Astrocyte of the cerebellum (primary cell): ENCODE measurements at regions of chr12 and their contacts with region 1.

Region 1: GRCh38 chr12:25332143-25332542 is 81.4 kb upstream of the KRAS start:
- DNase-seq: no peak
- H3K4me3 ChIP-seq: no peak overlapping the region
- CTCF ChIP-seq: no peak

Region 2: GRCh38 chr12:25295361-25295760 is 36.8 kb before region 1 on chr12:
- in situ Hi-C with region 1: no loop called
- DNase-seq: no peak
- H3K4me3 ChIP-seq: no peak overlapping the region
- CTCF ChIP-seq: no peak

Region 3: DNA sequence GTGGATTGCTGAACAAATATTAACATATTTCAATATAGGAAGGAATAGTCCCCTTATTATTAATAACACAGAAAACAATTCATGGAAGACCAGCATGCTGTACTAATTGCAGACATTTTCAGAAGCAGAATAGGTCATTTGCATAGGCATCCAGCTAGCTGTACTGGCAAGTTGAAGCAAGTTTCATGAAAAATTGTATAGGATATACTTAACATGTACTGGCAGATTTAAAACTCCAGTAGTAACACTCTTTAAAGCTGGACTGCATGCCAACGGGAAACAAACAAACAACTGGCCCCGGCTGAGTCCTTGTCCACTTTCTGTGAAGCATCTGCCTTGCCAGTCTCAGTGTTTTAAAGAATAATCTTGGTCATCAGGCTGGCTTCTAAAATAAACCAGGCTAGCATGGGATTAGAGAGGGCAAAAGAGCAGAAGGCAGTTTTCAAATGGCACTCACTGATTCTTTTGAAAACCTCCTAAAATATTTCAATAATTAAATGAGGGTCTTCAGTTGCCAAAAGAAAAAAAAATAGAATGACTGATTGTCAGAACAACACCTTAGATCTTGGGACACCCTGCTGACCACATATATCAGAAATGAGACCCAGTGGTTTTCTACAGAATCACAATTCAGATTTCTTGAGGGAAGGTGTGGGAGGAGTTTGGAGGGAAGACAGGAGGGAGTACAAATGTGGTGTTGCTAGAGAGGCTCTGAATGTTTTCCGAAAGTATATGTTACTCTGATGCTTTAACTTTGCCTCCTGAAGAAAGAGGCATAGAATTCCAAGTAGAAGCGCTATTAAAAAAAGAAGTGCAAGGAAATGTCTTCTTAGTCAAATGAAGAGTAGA is 41.0 kb after region 1 on chr12:
- in situ Hi-C with region 1: no loop called
- DNase-seq: no peak
- H3K4me3 ChIP-seq: no peak overlapping the region
- CTCF ChIP-seq: no peak

Region 4: DNA sequence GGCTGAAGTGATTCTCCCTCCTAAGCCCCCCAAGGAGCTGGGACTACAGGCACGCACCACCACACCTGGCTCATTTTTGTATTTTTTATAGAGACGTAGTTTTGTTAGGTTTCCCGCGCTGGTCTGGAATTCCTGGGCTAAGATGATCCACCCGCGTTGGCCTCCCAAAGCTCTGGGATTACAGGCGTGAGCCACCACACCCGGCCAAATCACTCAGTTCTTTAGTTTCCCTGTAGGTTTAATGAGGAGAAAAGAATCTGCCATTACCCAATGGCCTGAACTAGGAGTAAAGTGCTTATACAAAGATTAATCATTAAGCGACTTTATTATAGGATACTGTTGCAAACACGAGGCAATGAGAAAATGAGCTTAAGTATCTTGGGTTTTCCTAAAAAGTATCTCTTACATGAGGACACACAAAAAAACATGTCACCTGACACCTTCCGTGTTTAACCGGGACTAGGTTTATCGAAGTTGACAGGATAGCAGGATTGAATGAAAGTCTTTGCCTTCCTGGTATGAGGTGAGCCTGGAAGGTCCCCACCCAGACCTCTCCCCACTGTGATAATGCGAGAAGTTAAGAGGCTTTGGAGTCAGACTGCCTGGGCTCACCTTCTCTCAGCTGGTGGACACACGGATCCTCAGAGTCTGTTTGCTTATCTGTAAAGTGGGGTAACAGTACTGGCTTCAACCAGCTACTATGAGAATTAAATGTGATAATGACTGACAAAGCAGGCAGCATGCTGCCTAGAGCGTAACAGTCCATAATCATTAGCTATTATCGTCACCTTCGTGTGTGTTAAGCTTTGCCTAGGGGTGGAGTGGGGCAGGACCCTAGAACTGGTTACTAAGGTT is 52.1 kb after region 1 on chr12:
- in situ Hi-C with region 1: loop called (anchors 5 kb)
- DNase-seq: no peak
- H3K4me3 ChIP-seq: peak overlapping the region; percentile 63
- CTCF ChIP-seq: no peak

Region 5: GRCh38 chr12:25404955-25405354 is 72.8 kb after region 1 on chr12:
- in situ Hi-C with region 1: no loop called
- DNase-seq: no peak
- H3K4me3 ChIP-seq: no peak overlapping the region
- CTCF ChIP-seq: no peak